ENCODE measurements at regions of chr2 and their contacts with region 1.

Region 1: GRCh38 chr2:126527836-126528507 is 128.0 kb upstream of the GYPC start:
- DNase-seq: peak; percentile 79 to 84
- ATAC-seq: no peak
- H3K4me3 ChIP-seq: no peak overlapping the region
- H3K27ac ChIP-seq: no peak overlapping the region
- H3K4me1 ChIP-seq: no peaks in the 10 kb centered on the region
- H3K27me3 ChIP-seq: no peaks in the 10 kb centered on the region

Region 2: GRCh38 chr2:126467367-126468054 is 60.5 kb before region 1 on chr2:
- intact Hi-C with region 1: no loop called
- DNase-seq: no peak
- ATAC-seq: no peak
- H3K4me3 ChIP-seq: no peak overlapping the region
- H3K27ac ChIP-seq: no peak overlapping the region
- H3K4me1 ChIP-seq: no peaks in the 10 kb centered on the region
- H3K27me3 ChIP-seq: no peaks in the 10 kb centered on the region

Region 3: GRCh38 chr2:126776692-126777619 is 249.0 kb after region 1 on chr2:
- intact Hi-C with region 1: loop called (anchors 1 to 2 kb)
- DNase-seq: peak; percentile 87 to 96
- ATAC-seq: peak; percentile 92
- H3K4me3 ChIP-seq: peak overlapping the region; percentile 28 to 64
- H3K27ac ChIP-seq: no peak overlapping the region
- H3K4me1 ChIP-seq: no peaks in the 10 kb centered on the region
- H3K27me3 ChIP-seq: no peaks in the 10 kb centered on the region

Measured in aorta (tissue), 5 donors.